BJ (cell line): ENCODE measurements at regions of chr17 and their contacts with region 1.

Region 1: GRCh38 chr17:39952680-39953470 is 9.9 kb upstream of the GSDMA start:
- DNase-seq: peak; percentile 72
- H3K4me3 ChIP-seq: peak overlapping the region; percentile 40
- H3K27me3 ChIP-seq: no peaks in the 10 kb centered on the region
- CTCF ChIP-seq: no peak

Region 2: GRCh38 chr17:39813631-39814030 is 139.2 kb before region 1 on chr17:
- CTCF ChIA-PET with region 1: no interaction called
- POLR2A ChIA-PET with region 1: no interaction called
- DNase-seq: no peak
- H3K4me3 ChIP-seq: no peak overlapping the region
- H3K27me3 ChIP-seq: peaks cover 14% of the 10 kb centered on the region
- CTCF ChIP-seq: no peak

Region 3: GRCh38 chr17:39872751-39873150 is 80.1 kb before region 1 on chr17:
- CTCF ChIA-PET with region 1: interaction called, 10 read pairs
- POLR2A ChIA-PET with region 1: no interaction called
- DNase-seq: no peak
- H3K4me3 ChIP-seq: no peak overlapping the region
- H3K27me3 ChIP-seq: peaks cover 9% of the 10 kb centered on the region
- CTCF ChIP-seq: peak; percentile 42

Region 4: GRCh38 chr17:39972271-39972670 is 19.4 kb after region 1 on chr17:
- CTCF ChIA-PET with region 1: interaction called, 16 read pairs
- POLR2A ChIA-PET with region 1: no interaction called
- DNase-seq: no peak
- H3K4me3 ChIP-seq: no peak overlapping the region
- H3K27me3 ChIP-seq: peaks cover 6% of the 10 kb centered on the region; the same call in 1 of the 2 replicates
- CTCF ChIP-seq: no peak

Region 5: GRCh38 chr17:39996800-39997199 is 43.9 kb after region 1 on chr17:
- CTCF ChIA-PET with region 1: no interaction called
- POLR2A ChIA-PET with region 1: no interaction called
- DNase-seq: no peak
- H3K4me3 ChIP-seq: no peak overlapping the region
- H3K27me3 ChIP-seq: no peaks in the 10 kb centered on the region
- CTCF ChIP-seq: no peak

Region 6: GRCh38 chr17:40242774-40243173 is 289.9 kb after region 1 on chr17:
- CTCF ChIA-PET with region 1: no interaction called
- POLR2A ChIA-PET with region 1: no interaction called
- DNase-seq: peak; percentile 42
- H3K4me3 ChIP-seq: no peak overlapping the region
- H3K27me3 ChIP-seq: no peaks in the 10 kb centered on the region
- CTCF ChIP-seq: no peak

Region 7: GRCh38 chr17:40450175-40450574 is 497.3 kb after region 1 on chr17:
- CTCF ChIA-PET with region 1: no interaction called
- POLR2A ChIA-PET with region 1: no interaction called
- DNase-seq: no peak
- H3K4me3 ChIP-seq: no peak overlapping the region
- H3K27me3 ChIP-seq: no peaks in the 10 kb centered on the region
- CTCF ChIP-seq: peak; percentile 70